Esophagus squamous epithelium (tissue), 5 donors: ENCODE measurements at regions of chr3 and their contacts with region 1.

Region 1: DNA sequence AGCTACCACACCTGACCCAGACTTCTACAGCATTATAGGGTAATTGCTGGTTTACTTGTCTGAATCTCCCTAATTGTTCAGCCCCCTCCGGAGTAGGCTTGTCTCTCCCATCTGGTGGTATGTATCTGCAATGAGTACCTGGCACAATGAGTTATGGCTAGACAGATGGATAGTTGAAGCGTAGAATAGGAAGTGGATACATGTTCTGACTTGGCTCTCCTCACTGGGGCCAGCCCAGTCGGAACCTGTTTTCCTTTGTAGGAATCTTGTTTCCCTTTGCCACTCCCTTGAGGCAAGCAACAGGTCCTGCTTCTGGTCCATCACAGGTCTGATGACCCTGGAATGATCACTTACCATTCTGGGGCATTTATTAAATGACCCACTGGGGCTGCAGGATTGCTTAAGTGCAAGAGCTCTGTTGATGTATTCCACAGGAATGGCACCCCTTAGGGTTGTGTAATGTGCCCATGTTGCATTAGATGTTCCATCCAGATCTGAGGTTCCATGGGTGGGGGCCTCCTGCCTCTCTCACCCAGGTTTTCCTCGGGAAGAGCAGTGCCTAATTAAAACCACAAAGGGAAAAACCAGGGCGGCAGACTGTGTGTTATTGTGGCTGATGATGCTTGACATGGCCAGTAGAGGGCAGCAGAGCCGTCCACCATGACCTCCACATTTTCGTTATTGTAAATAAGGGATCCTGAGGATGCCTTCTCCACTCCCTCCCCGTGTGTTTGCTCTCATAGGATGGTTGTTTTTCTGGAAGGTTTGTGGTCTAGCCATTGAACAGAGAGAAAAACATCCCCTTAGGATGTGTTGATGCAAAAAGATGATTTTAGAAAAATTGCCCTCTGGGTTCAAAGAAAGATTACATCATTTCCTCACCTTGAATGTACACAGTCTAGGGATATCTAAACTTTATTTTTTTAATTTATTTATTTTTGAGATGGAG is 58.0 kb downstream of the CMTM8 start:
- DNase-seq: no peak
- H3K4me3 ChIP-seq: no peak overlapping the region
- H3K27ac ChIP-seq: no peak overlapping the region
- H3K4me1 ChIP-seq: peaks cover 0 to 38% (median 9%) of the 10 kb centered on the region in 3 donors
- H3K27me3 ChIP-seq: no peaks in the 10 kb centered on the region
- CTCF ChIP-seq: peak; percentile 65 to 84 (median 77)
- POLR2A ChIP-seq: no peak

Region 2: GRCh38 chr3:32184187-32184730 is 112.3 kb before region 1 on chr3:
- intact Hi-C with region 1: loop called (anchors 10 kb)
- DNase-seq: no peak
- H3K4me3 ChIP-seq: no peak overlapping the region
- H3K27ac ChIP-seq: no peak overlapping the region
- H3K4me1 ChIP-seq: peaks cover 0 to 13% (median 0%) of the 10 kb centered on the region in 3 donors
- H3K27me3 ChIP-seq: peaks cover 0 to 6% (median 0%) of the 10 kb centered on the region in 4 donors
- CTCF ChIP-seq: no peak
- POLR2A ChIP-seq: no peak

Region 3: GRCh38 chr3:32467333-32468070 is 171.0 kb after region 1 on chr3:
- intact Hi-C with region 1: loop called (anchors 10 kb)
- DNase-seq: no peak
- H3K4me3 ChIP-seq: peak overlapping the region; percentile 15 to 69 (median 42)
- H3K27ac ChIP-seq: peak overlapping the region in 1 of 4 donors; percentile 19
- H3K4me1 ChIP-seq: peaks cover 18 to 36% (median 25%) of the 10 kb centered on the region in 3 donors
- H3K27me3 ChIP-seq: peaks cover 0 to 18% (median 0%) of the 10 kb centered on the region in 4 donors
- CTCF ChIP-seq: peak; percentile 96 to 100 (median 97)
- POLR2A ChIP-seq: no peak

Region 4: DNA sequence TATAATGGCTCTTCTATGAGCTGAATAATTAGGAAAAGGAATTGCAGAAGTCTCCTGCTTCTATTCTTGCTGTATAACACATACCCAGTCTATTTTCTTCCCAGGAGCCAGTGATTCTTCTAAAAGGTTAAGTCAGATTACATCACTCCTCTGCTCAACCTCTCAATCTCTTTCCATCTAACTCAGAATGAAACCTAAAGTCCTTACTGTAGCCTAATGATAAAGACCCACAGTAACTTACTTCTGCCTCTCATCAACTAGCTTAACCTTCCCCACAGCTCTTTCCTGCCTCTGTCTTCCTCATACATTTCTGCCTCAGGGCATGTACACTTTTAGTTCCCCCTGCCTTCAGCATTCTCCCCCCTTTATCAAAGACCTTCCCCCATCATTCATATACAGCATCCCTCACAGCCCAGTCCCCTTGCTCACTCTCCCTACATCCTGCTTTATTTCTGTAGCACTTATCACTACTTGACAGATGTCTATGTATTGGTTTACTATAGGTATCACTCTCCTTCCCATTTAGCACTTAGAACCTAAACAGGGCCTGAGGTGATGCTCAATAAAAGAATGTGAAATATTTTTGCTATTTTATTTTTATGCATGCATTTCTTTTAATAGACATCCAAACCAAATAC is 234.6 kb after region 1 on chr3:
- intact Hi-C with region 1: no loop called
- DNase-seq: no peak
- H3K4me3 ChIP-seq: no peak overlapping the region
- H3K27ac ChIP-seq: no peak overlapping the region
- H3K4me1 ChIP-seq: no peaks in the 10 kb centered on the region
- H3K27me3 ChIP-seq: no peaks in the 10 kb centered on the region
- CTCF ChIP-seq: no peak
- POLR2A ChIP-seq: no peak

Region 5: DNA sequence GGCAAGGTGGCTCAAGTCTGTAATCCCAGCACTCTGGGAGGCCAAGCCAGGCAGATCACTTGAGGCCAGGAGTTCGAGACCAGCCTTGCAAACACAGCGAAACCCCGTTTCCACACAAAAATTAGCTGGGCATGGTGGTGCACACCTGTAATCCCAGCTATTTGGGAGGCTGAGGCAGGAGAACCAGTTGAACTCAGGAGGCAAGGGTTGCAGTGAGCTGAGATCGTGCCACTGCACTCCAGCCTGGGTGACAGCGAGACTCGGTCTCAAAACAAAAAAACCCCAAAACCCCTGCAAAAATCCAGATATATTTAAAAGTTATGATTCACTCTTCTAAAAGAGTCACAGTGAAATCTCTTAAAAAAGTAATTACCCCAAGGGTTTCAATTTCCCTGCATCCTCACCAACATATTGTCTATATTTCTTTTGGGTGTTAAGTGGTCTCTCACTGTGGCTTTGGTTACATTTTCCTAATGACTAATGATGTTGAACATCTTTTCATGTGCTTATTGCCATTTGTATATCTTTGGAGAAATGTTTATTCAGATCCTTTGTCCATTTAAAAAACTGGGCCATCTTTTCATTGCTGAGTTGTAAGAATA is 1216.8 kb after region 1 on chr3:
- intact Hi-C with region 1: no loop called
- DNase-seq: no peak
- H3K4me3 ChIP-seq: no peak overlapping the region
- H3K27ac ChIP-seq: no peak overlapping the region
- H3K4me1 ChIP-seq: no peaks in the 10 kb centered on the region
- H3K27me3 ChIP-seq: no peaks in the 10 kb centered on the region
- CTCF ChIP-seq: no peak
- POLR2A ChIP-seq: no peak